Left ventricle myocardium superior (tissue), 1 donor: ENCODE measurements at regions of chr4 and their contacts with region 1.

Region 1: DNA sequence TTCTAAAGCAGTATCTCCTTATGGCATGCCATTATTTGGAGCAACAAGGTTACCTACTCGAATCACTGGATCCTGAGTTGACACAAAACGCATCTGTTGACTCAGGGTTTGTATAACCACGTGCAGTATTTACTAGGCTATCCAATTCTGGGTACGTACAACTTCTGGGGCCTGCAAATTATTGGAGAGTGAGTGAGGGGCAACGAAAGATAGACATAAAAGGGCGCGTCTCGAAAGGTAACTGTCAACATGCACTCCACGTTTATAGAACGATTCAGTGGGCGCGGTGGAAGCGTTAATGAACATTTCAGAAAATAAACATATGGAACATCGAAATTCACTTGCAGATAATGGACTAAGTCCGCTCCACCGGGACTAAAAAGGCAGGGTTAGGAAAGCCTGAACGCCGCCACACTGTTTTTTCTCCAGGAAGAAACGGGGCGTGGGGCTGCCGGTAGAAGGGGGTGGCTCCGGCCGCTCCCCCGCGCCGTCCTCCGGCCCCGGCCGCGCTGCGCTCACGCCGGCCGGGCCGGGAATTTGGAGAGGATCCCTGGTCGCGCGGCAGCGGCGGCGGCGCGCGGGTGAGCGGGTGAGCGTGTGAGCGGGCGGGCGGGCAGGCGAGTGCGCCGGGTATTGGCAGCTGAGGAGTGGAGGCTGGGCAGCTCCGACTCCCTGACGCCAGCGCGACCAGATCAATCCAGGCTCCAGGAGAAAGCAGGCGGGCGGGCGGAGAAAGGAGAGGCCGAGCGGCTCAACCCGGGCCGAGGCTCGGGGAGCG is at the start of gene SMAD1:
- DNase-seq: peak; percentile 91
- ATAC-seq: peak; percentile 96
- total RNA-seq, gene SMAD1: 12.5 TPM

Region 2: DNA sequence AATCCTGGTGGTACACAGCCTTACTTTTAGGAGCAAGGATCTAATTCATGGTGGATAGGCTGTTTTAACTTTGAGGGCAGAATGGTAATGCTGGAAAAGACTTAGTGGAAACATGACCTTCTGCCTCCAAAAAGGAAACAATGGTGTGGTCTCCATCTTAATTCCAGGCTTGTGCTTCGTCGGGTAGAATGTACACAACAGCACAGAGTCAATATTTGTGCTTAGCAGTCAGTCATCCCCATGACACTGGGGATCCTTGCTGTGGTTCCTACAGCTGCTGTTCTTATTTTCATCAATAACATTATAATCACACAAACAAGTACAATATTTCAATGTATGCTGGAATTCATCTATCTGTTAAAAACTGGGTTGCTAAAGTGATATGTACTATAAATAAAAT is 731.0 kb before region 1 on chr4:
- intact Hi-C with region 1: no loop called
- DNase-seq: no peak
- ATAC-seq: no peak

Region 3: DNA sequence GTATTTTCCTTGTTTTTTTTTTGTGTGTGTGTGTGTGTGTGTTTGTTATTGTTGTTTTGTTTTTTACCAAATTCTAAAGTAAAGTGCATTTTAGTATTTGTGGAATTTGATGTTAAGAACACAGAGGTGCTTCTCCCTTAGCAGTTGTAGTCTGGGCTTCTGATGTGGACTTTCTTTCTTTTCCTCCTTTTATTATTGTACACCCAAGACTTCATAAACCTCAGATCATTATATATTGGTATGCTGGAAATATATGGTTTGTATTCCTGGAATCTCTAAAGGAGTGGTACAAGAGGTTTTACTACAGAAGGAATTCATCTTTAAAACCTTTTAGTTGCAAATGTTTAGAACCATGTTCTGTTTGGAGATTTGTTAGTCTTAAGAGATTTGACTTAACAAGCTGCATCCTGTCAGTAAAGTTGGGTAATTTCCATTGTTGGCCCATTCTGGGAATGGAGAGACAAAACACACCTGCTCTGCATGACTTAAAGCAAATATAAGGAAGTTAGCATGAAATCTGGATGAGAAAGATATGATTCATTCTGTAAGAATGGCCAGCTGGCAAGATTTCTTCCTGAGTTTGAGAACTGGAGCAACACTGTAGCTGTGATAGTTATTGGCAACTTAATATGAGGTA is 64.3 kb after region 1 on chr4:
- intact Hi-C with region 1: loop called (anchors 5 kb)
- DNase-seq: no peak
- ATAC-seq: peak; percentile 80

Region 4: DNA sequence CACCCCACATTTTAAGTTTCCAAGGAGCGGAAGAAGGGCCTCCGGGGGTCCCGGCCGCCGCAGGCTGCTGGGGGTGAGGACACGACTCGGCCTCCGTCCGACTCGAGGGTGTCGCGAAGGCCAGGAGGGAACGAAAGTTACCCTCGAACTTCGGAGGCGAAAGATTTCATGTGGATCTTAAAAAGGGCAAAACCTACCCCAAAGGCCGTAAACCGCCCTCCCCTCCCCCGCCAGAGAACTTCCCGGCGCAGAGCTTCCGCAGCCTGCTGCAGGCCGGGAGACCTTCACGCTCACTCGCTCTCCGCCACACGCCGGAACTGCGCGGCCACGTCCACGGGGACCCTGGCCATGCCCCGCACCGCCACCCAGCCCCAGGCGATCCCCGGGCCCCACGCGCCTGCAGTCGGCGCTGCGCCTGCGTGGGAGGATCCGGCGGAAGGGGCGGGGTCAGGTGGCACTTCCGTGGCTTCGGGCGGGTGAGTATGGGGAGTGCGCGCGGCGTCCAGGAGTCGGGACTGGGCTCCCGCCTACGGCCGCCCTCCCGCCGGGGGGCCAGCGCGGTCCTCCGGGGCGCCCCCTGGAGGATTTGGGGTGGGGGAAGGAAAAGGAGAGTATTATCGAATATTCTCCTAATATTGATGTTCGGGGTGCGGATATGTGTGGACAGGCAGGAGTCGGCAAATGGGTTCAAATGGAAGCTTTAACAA is 137.7 kb after region 1 on chr4 and contains the start of gene MMAA:
- intact Hi-C with region 1: loop called (anchors 10 kb)
- DNase-seq: peak; percentile 97
- ATAC-seq: peak; percentile 100
- total RNA-seq, gene MMAA: 8.6 TPM